Activated CD4-positive, alpha-beta T cell treated with anti-CD3 and anti-CD28 coated beads, Interleukin-2, amount 10 ng/mL, durations not matched to agents 7 days and 5 days (primary cell): ENCODE measurements at regions of chr17 and their contacts with region 1.

Region 1: DNA sequence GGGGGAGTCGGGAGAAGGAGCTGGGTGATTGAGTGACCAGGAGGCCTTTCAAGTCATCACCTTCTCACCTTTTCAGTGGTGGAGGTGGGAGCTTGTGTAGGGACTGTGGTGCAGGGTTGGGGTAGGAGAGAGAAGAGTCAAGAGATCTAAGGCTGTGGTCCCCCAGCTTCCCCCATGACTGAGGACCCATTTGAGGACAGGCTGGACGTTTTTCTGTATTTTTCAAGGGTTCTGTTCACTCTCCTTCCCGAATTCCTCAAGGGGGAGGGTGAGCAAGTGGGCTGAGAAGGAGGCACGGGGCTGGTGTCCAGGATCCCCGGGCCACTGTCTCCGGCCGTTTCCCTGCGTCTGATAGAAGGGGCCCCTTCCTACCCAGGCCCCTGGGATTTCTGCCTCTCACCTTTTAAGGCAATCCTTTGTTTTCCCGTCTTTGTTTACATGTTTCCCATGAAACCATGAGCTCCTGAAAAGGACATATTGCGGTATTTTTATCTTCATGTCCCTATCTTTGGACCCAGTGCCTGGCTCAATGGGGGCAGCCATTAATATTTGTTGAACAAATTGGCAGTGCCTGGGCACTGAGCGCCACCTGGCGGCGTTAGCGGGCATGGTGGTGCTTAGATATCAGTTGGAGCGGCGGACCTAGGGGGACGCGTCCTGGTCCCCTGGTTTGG is 9.2 kb upstream of the CD300A start:
- DNase-seq: peak; percentile 69
- H3K4me3 Mint-ChIP-seq: no peak overlapping the region
- H3K27ac Mint-ChIP-seq: no peak overlapping the region
- H3K4me1 Mint-ChIP-seq: peaks cover 28% of the 10 kb centered on the region
- H3K27me3 Mint-ChIP-seq: peaks cover 23% of the 10 kb centered on the region

Region 2: DNA sequence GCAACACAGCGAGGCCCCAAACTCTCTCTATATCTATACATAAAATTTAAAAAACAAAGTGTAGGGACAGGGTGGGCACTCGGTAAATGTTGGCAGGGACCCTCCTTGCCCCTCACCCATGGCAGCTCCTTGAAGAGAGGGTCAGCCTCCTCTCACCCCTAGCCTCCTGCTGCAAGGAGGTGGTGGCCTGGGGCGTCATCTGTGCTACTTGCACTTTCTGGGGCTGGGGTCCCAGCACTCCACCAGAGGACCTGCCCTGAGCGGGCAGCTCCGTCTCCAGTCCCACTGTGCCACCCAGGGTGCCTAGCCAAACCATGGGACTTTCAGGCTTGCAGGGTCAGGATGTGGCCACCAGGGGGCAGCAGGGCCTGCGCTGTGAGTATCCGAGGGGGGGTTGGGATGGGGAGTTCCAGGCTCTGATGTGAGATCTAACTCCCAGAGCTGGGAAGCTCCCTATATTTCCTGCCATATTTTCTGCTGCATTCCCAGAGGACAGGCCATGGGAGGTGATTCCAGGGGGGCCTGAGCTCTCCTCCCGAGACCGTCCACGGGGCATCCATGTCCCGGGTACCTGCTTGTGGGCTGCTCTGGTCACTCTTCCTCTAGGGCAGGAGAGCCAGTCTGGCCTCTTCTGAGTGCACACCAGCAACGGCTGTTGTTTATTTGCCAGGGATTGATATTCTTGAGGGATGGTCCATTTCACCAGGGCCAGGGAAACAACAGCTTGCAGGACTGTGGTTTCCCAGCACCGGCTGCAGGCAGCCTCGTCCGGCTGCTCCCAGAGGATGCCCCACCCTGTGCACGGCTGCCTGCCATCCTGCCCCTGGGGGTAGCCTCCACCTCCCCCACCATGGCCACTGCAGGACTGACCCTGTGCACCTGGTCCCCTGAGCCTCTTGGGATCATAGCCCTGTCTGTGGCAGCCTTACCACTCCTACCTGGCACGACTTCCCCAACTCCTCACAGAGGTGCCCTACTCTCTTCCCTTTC is 88.9 kb before region 1 on chr17:
- CTCF ChIA-PET with region 1: interaction called, 35 read pairs
- POLR2A ChIA-PET with region 1: interaction called, 3 read pairs
- DNase-seq: peak; percentile 74
- H3K4me3 Mint-ChIP-seq: no peak overlapping the region
- H3K27ac Mint-ChIP-seq: no peak overlapping the region
- H3K4me1 Mint-ChIP-seq: peaks cover 16% of the 10 kb centered on the region
- H3K27me3 Mint-ChIP-seq: peaks cover 1% of the 10 kb centered on the region

Region 3: GRCh38 chr17:74408262-74408661 is 49.0 kb before region 1 on chr17:
- CTCF ChIA-PET with region 1: no interaction called
- POLR2A ChIA-PET with region 1: no interaction called
- DNase-seq: no peak
- H3K4me3 Mint-ChIP-seq: no peak overlapping the region
- H3K27ac Mint-ChIP-seq: no peak overlapping the region
- H3K4me1 Mint-ChIP-seq: peaks cover 1% of the 10 kb centered on the region
- H3K27me3 Mint-ChIP-seq: peaks cover 2% of the 10 kb centered on the region

Region 4: DNA sequence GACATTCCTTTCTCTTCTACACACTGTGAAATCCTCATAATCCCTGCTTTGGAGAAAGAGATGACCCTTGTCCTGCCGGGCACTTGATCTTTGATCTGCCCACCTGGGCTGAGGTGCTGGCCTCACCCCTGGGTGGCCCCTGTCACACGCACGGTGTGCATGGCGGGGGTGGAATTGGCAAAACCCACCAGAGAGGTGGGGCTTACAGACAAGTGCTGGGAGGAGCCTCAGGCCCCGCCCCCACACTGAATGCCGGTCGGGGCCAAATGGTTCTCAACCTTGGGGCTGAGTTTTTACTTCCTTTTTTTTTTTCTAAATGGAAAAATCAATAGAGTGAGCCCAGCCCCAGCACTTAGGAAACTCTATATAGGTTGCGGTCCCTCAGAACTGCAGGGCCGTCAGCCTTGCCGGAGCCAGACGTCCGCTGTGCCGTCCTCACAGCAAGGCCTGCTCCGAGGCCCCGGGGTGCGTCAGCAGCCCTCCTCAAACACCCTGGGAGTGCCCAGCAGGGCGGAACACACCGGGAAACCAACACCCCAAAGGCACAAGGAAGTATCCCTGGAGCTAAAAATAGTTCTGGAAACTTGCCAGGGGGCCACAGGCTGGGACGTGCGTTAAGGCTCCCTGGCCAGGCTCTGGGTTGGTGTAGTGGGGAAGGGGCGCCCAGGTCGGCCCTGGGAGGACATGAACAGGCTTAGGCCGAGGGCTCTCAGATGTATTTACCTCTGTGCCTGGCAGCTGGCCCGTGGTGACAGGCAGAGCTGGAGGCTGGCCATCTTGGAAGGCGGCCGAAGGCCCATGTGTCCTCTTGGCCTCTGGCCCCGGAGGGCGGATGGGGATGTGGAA is 14.4 kb before region 1 on chr17:
- CTCF ChIA-PET with region 1: interaction called, 18 read pairs
- POLR2A ChIA-PET with region 1: no interaction called
- DNase-seq: no peak
- H3K4me3 Mint-ChIP-seq: no peak overlapping the region
- H3K27ac Mint-ChIP-seq: no peak overlapping the region
- H3K4me1 Mint-ChIP-seq: peaks cover 2% of the 10 kb centered on the region
- H3K27me3 Mint-ChIP-seq: peaks cover 9% of the 10 kb centered on the region

Region 5: DNA sequence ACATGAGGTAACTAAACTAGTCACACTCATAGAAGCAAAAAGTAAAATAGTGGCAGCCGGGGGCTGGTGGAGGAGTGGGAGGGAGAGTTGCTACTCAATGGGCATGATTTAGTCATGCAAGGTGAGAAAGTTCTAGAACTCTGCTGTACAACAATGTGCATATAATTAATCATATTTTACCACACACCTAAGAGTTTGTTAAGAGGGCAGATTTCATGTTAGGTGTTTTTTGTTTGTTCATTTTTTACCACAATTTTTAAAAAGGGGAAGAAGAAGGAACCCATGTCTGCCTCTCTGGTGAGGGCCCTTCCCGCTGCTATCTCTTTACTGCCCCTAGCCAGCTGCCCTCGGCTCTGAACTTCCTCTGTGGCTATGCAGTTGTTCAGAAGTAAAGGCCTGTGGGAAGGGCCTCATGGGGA is 62.7 kb after region 1 on chr17:
- CTCF ChIA-PET with region 1: no interaction called
- POLR2A ChIA-PET with region 1: no interaction called
- DNase-seq: no peak
- H3K4me3 Mint-ChIP-seq: no peak overlapping the region
- H3K27ac Mint-ChIP-seq: no peak overlapping the region
- H3K4me1 Mint-ChIP-seq: peaks cover 9% of the 10 kb centered on the region
- H3K27me3 Mint-ChIP-seq: peaks cover 17% of the 10 kb centered on the region